ENCODE measurements at regions of chr1 and their contacts with region 1.

Region 1: DNA sequence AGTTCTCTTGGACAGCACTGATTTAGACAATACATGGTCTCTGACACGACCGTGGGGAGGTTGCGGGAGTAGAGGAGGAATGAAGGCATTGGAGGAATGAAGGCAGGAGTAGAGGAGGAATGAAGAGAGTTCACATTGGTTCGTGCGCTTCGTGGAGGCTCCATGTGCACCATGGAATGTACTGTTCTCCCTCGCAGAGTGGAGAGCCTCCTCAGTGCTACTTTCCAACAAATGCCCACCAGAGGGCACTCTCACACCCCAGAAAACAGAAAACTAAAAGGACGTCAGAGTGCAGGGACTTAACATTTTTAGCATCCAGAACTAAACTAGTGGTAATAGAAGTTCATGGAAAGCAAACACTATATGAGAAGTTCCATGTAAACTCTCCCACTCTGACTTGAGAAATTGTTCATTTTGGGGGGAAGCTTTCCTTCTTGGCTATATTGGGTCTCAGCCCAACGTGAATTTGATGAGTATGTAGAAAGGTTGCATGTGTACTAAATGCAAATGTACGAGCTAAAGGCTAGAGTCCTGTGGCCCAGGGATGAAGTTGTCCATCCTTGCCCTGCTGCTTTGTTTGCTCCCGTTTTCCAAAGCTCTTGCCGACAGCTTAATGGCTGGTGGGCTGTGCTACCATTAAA is 211.6 kb downstream of the LMX1A start:
- DNase-seq: peak; percentile 48
- H3K4me3 ChIP-seq: no peak overlapping the region
- H3K27ac ChIP-seq: no peak overlapping the region
- H3K4me1 ChIP-seq: no peaks in the 10 kb centered on the region
- H3K27me3 ChIP-seq: no peaks in the 10 kb centered on the region
- CTCF ChIP-seq: peak; percentile 66 to 80

Region 2: DNA sequence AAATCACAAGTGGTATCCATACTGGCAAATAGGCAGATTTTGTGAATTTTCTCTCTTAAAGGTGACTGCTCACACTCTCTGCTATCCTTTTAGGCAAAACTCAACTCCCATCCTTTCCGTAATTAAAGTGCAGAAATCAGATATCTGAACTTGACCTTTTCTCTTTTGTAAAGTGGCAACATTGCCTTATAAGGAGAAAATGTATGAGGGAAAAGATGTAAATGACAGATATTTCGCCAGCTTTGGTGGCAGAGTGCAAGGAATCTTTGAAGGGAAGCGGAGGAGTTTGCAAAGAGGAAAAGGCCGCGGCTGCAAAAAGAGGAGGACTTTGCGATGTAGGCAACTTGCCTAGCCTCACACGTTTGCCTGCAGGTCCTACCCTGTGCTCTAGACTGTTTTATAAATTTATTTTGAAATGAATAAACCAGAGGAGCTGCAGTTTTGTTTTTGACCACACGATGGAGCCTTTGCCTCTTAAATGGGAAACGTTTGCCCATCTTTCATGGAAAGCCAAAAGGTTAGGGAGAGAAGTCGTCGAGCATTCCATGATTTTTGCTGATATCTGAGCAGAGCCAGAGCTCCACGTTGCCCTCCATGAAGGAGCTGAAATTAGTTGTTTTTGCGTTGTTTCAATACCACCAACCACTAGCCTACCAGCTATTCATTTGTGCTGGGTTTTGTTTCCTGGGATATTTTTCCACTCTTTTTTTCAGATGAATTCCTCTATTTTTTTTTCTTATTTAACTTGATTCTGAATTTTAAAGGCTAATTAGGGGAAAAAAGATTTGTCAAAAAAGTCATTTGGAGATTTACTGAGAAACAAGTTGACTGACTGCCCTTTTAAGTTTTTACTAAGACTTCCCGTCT is 30.6 kb before region 1 on chr1:
- CTCF ChIA-PET with region 1: no interaction called
- dilution Hi-C with region 1: no loop called
- in situ Hi-C with region 1: no loop called
- intact Hi-C with region 1: loop called (anchors 1 kb)
- DNase-seq: peak; percentile 38
- H3K4me3 ChIP-seq: no peak overlapping the region
- H3K27ac ChIP-seq: no peak overlapping the region
- H3K4me1 ChIP-seq: peaks cover 13% of the 10 kb centered on the region
- H3K27me3 ChIP-seq: no peaks in the 10 kb centered on the region
- CTCF ChIP-seq: peak; percentile 77 to 80

Region 3: DNA sequence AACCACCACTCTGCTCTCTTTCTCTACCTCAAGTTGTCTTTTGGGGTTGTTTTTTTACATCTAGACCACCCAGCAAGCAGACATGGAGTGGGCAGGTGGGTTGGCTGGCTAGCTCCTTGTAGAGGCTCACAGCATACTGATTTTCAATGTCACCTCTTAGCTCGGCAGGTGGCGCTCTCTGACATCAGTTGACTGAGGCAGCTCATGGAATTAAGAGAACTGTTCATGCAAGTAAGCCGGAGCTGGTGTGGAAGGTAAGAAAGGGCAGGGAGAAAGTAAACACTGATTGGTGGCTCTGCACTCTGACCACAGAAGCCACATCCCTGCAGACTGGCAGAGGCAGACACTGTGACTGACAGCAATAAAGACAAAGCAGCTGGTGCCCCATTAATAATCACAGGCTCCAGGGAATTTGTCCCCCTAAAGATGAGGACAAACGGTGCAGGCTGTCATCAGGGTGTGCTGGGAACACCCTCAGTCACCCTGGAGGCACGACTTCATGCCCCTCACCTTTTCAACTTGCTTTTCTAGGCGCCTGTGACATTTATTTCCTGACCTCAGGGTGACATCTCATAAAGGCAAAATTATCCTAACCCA is 15.2 kb before region 1 on chr1:
- CTCF ChIA-PET with region 1: no interaction called
- dilution Hi-C with region 1: no loop called
- in situ Hi-C with region 1: no loop called
- intact Hi-C with region 1: loop called (anchors 1 kb)
- DNase-seq: peak; percentile 55
- H3K4me3 ChIP-seq: no peak overlapping the region
- H3K27ac ChIP-seq: no peak overlapping the region
- H3K4me1 ChIP-seq: no peaks in the 10 kb centered on the region
- H3K27me3 ChIP-seq: peaks cover 13% of the 10 kb centered on the region
- CTCF ChIP-seq: peak; percentile 79 to 82

Region 4: GRCh38 chr1:165257969-165258459 is 113.1 kb after region 1 on chr1:
- CTCF ChIA-PET with region 1: no interaction called
- dilution Hi-C with region 1: no loop called
- in situ Hi-C with region 1: no loop called
- intact Hi-C with region 1: loop called (anchors 2 kb)
- DNase-seq: peak; percentile 55
- H3K4me3 ChIP-seq: no peak overlapping the region
- H3K27ac ChIP-seq: no peak overlapping the region
- H3K4me1 ChIP-seq: peaks cover 4% of the 10 kb centered on the region
- H3K27me3 ChIP-seq: no peaks in the 10 kb centered on the region
- CTCF ChIP-seq: peak; percentile 85 to 86

Region 5: GRCh38 chr1:165367375-165367993 is 222.6 kb after region 1 on chr1:
- CTCF ChIA-PET with region 1: no interaction called
- dilution Hi-C with region 1: no loop called
- in situ Hi-C with region 1: loop called (anchors 10 kb)
- intact Hi-C with region 1: loop called (anchors 1 kb)
- DNase-seq: peak; percentile 37
- H3K4me3 ChIP-seq: no peak overlapping the region
- H3K27ac ChIP-seq: no peak overlapping the region
- H3K4me1 ChIP-seq: peaks cover 13% of the 10 kb centered on the region
- H3K27me3 ChIP-seq: no peaks in the 10 kb centered on the region
- CTCF ChIP-seq: peak; percentile 94 to 95

Measured in mammary epithelial cell (primary cell).